WTC11 (cell line): ENCODE measurements at regions of chr3 and their contacts with region 1.

Region 1: GRCh38 chr3:69161587-69162307 is 39.4 kb upstream of the LMOD3 start:
- DNase-seq: no peak
- ATAC-seq: peak; percentile 43
- H3K4me3 Mint-ChIP-seq: no peak overlapping the region
- H3K27ac Mint-ChIP-seq: no peak overlapping the region
- H3K4me1 Mint-ChIP-seq: peaks cover 16% of the 10 kb centered on the region
- H3K27me3 Mint-ChIP-seq: no peaks in the 10 kb centered on the region
- CTCF ChIP-seq: peak; percentile 67

Region 2: GRCh38 chr3:69120879-69121464 is 40.8 kb before region 1 on chr3:
- CTCF ChIA-PET with region 1: interaction called, 12 read pairs
- POLR2A ChIA-PET with region 1: no interaction called
- DNase-seq: peak; percentile 90
- ATAC-seq: peak; percentile 74
- H3K4me3 Mint-ChIP-seq: no peak overlapping the region
- H3K27ac Mint-ChIP-seq: no peak overlapping the region
- H3K4me1 Mint-ChIP-seq: peaks cover 8% of the 10 kb centered on the region; the same call in 1 of the 2 replicates
- H3K27me3 Mint-ChIP-seq: no peaks in the 10 kb centered on the region
- CTCF ChIP-seq: peak; percentile 94

Region 3: DNA sequence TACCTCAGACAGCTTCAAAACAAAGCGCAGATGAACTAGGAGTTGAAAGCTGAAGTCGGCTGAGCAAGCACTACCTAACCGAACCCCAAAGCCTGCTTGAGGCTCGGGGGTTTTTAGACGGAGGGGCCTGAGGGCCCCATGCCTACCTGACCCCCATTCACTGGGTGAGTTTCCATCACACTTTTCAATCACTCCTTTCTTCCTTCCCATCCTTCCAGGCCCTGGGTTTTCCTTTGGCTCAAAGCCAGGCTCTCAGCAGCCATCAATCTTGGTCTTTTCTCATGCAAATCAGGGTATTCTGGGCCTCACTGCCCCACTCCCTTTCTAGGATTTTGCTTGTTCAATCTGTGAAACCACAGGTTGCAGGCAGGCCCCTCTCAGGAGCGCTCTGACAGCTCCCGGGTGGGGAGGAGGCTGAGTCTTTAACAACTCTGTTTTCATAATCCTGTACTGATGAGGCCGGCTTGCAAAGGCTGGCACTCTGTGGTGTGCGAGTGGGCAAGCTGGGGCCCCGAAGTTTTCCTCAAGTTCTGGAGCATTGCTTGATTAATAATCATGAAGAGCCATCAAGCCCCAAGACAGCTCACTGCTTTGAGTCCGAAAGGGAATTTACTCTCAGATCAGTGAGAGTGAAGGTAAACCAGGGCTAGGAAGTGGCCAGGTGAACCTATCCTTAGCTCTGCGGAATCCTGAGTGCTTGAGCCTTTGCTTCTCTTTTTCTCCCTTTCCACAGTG is 126.6 kb after region 1 on chr3:
- CTCF ChIA-PET with region 1: interaction called, 12 read pairs
- POLR2A ChIA-PET with region 1: interaction called, 6 read pairs
- DNase-seq: peak; percentile 75
- ATAC-seq: peak; percentile 94
- H3K4me3 Mint-ChIP-seq: peak overlapping the region; percentile 53
- H3K27ac Mint-ChIP-seq: peak overlapping the region; percentile 66
- H3K4me1 Mint-ChIP-seq: peaks cover 67% of the 10 kb centered on the region
- H3K27me3 Mint-ChIP-seq: peaks cover 14% of the 10 kb centered on the region
- CTCF ChIP-seq: no peak